ENCODE measurements at regions of chr14 and their contacts with region 1.

Region 1: GRCh38 chr14:96741151-96741977 is 55.8 kb upstream of the VRK1 start:
- DNase-seq: no peak
- H3K4me3 ChIP-seq: peak overlapping the region; percentile 19 to 63 (median 38)
- H3K27ac ChIP-seq: no peak overlapping the region
- H3K4me1 ChIP-seq: peaks cover 0 to 13% (median 4%) of the 10 kb centered on the region in 3 donors
- H3K27me3 ChIP-seq: peaks cover 0 to 98% (median 2%) of the 10 kb centered on the region in 4 donors
- CTCF ChIP-seq: peak; percentile 73 to 92 (median 78)
- POLR2A ChIP-seq: no peak

Region 2: GRCh38 chr14:96574633-96575632 is 166.4 kb before region 1 on chr14:
- intact Hi-C with region 1: loop called (anchors 5 kb)
- DNase-seq: no peak
- H3K4me3 ChIP-seq: no peak overlapping the region
- H3K27ac ChIP-seq: peak overlapping the region; percentile 17 to 81 (median 54)
- H3K4me1 ChIP-seq: peaks cover 0 to 53% (median 14%) of the 10 kb centered on the region in 3 donors
- H3K27me3 ChIP-seq: no peaks in the 10 kb centered on the region
- CTCF ChIP-seq: no peak
- POLR2A ChIP-seq: no peak